ENCODE measurements at regions of chr6 and their contacts with region 1.

Region 1: GRCh38 chr6:113944701-113945100 is 26.2 kb downstream of the HDAC2 start:
- DNase-seq: no peak
- H3K4me3 ChIP-seq: no peak overlapping the region
- H3K27ac ChIP-seq: no peak overlapping the region
- H3K4me1 ChIP-seq: no peaks in the 10 kb centered on the region
- H3K27me3 ChIP-seq: no peaks in the 10 kb centered on the region
- CTCF ChIP-seq: no peak

Region 2: GRCh38 chr6:112144145-112144926 is 1800.4 kb before region 1 on chr6:
- CTCF ChIA-PET with region 1: no interaction called
- POLR2A ChIA-PET with region 1: interaction called, 17 read pairs
- intact Hi-C with region 1: no loop called
- DNase-seq: no peak
- H3K4me3 ChIP-seq: no peak overlapping the region
- H3K27ac ChIP-seq: no peak overlapping the region
- H3K4me1 ChIP-seq: no peaks in the 10 kb centered on the region
- H3K27me3 ChIP-seq: no peaks in the 10 kb centered on the region
- CTCF ChIP-seq: no peak

Region 3: GRCh38 chr6:113172531-113172966 is 772.2 kb before region 1 on chr6:
- CTCF ChIA-PET with region 1: no interaction called
- POLR2A ChIA-PET with region 1: no interaction called
- intact Hi-C with region 1: no loop called
- DNase-seq: no peak
- H3K4me3 ChIP-seq: no peak overlapping the region
- H3K27ac ChIP-seq: no peak overlapping the region
- H3K4me1 ChIP-seq: no peaks in the 10 kb centered on the region
- H3K27me3 ChIP-seq: no peaks in the 10 kb centered on the region
- CTCF ChIP-seq: no peak

Region 4: DNA sequence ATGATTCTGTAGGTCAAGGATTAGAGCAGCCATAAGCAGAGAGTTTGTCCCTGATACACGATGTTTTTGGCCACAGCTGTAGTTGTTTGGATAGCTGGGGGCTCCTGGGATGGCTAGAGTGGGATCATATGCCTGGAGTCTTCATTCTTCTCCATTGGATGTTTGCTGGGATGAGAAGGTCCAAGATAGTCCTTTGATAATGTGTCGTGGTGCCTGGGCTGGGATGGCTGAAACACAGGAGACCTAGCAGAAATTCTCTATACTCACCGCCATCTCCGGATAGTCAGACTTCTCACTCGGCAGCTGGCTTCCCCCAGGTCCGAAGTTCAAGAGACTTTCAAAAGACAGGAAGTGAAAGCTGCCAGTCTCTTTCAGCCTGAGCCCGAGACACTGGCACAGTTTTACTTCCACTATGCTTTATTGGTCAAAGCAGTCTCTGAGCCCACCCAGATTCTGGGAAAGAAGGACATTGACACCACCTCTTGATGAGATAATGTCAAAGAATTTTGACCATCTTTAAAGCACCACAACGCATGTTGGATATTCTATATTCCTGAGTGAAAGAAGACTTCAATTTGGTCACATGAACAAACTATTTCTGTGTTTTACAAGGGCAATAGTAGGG is 71.5 kb before region 1 on chr6:
- CTCF ChIA-PET with region 1: no interaction called
- POLR2A ChIA-PET with region 1: no interaction called
- intact Hi-C with region 1: no loop called
- DNase-seq: no peak
- H3K4me3 ChIP-seq: no peak overlapping the region
- H3K27ac ChIP-seq: no peak overlapping the region
- H3K4me1 ChIP-seq: no peaks in the 10 kb centered on the region
- H3K27me3 ChIP-seq: no peaks in the 10 kb centered on the region
- CTCF ChIP-seq: no peak